ENCODE measurements at regions of chr4 and their contacts with region 1.

Region 1: GRCh38 chr4:1266881-1267763 is 18.2 kb upstream of the CTBP1 start:
- DNase-seq: peak in 3 of 14 experiments; percentile 23 to 40 (median 32)
- ATAC-seq: peak; percentile 81
- H3K4me3 ChIP-seq: peak overlapping the region; percentile 51
- H3K4me3 Mint-ChIP-seq: peak overlapping the region; percentile 78
- H3K27ac ChIP-seq: peak overlapping the region; percentile 38 to 58
- H3K27ac Mint-ChIP-seq: peak overlapping the region; percentile 94
- H3K4me1 ChIP-seq: peaks cover 4% of the 10 kb centered on the region
- H3K4me1 Mint-ChIP-seq: peaks cover 14% of the 10 kb centered on the region
- H3K27me3 ChIP-seq: no peaks in the 10 kb centered on the region
- H3K27me3 Mint-ChIP-seq: no peaks in the 10 kb centered on the region
- CTCF ChIP-seq: no peak

Region 2: DNA sequence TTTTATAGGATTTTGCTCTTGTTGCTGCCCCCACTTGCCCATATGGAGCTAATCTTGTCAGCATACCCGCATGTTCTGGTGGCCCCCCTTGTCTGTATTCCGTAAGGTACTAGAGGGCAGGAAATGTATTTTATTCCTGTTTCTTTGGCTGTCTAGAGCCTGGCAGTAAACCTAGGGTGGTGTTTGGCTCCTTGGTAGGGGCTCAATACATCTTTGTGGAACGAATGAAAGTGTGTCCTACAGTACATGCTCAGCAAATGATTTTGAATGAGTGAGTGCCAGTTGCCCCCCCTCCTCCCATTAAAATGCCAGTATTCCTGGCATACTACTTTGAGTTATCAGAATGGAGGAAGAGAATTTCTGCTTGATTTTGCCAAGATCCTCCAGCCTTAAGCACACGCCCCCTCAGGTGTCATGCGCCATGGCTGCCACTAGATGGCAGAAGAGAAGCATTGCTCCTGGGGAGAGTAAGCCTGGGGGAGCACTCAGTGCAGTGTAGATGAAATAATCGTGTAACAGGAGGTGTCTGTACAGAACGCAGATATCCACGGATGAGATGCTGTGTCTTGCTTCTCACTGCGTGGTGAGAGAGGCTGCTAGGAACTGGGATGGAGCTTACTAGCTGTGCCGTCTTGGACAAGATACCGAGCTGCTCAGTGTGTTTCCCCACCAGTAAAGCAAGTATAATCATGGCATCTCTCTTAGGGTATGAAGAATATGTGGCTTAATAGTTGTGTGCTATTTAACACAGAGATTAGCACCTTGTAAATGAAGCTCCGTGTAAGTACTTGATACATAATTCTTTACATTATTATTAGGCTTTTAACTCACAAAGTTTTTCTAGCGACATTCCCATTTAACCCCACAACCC is 136.6 kb before region 1 on chr4:
- CTCF ChIA-PET with region 1: interaction called, 20 read pairs
- POLR2A ChIA-PET with region 1: no interaction called
- intact Hi-C with region 1: loop called (anchors 1 kb)
- DNase-seq: peak; percentile 64 to 89 (median 72)
- ATAC-seq: peak; percentile 100
- H3K4me3 ChIP-seq: no peak overlapping the region
- H3K4me3 Mint-ChIP-seq: no peak overlapping the region
- H3K27ac ChIP-seq: no peak overlapping the region
- H3K27ac Mint-ChIP-seq: no peak overlapping the region
- H3K4me1 ChIP-seq: peaks cover 3% of the 10 kb centered on the region
- H3K4me1 Mint-ChIP-seq: peaks cover 5% of the 10 kb centered on the region
- H3K27me3 ChIP-seq: peaks cover 0 to 5% of the 10 kb centered on the region in 2 experiments
- H3K27me3 Mint-ChIP-seq: peaks cover 8% of the 10 kb centered on the region
- CTCF ChIP-seq: peak; percentile 99

Region 3: GRCh38 chr4:1167247-1167949 is 99.7 kb before region 1 on chr4:
- CTCF ChIA-PET with region 1: interaction called, 38 read pairs
- POLR2A ChIA-PET with region 1: interaction called, 10 read pairs
- intact Hi-C with region 1: loop called (anchors 1 kb)
- DNase-seq: peak; percentile 69 to 96 (median 84)
- ATAC-seq: peak; percentile 87
- H3K4me3 ChIP-seq: peak overlapping the region; percentile 79
- H3K4me3 Mint-ChIP-seq: peak overlapping the region; percentile 90
- H3K27ac ChIP-seq: no peak overlapping the region
- H3K27ac Mint-ChIP-seq: peak overlapping the region; percentile 67
- H3K4me1 ChIP-seq: peaks cover 40% of the 10 kb centered on the region
- H3K4me1 Mint-ChIP-seq: peaks cover 25% of the 10 kb centered on the region
- H3K27me3 ChIP-seq: peaks cover 19 to 21% of the 10 kb centered on the region in 2 experiments
- H3K27me3 Mint-ChIP-seq: peaks cover 16% of the 10 kb centered on the region
- CTCF ChIP-seq: peak; percentile 97

Region 4: DNA sequence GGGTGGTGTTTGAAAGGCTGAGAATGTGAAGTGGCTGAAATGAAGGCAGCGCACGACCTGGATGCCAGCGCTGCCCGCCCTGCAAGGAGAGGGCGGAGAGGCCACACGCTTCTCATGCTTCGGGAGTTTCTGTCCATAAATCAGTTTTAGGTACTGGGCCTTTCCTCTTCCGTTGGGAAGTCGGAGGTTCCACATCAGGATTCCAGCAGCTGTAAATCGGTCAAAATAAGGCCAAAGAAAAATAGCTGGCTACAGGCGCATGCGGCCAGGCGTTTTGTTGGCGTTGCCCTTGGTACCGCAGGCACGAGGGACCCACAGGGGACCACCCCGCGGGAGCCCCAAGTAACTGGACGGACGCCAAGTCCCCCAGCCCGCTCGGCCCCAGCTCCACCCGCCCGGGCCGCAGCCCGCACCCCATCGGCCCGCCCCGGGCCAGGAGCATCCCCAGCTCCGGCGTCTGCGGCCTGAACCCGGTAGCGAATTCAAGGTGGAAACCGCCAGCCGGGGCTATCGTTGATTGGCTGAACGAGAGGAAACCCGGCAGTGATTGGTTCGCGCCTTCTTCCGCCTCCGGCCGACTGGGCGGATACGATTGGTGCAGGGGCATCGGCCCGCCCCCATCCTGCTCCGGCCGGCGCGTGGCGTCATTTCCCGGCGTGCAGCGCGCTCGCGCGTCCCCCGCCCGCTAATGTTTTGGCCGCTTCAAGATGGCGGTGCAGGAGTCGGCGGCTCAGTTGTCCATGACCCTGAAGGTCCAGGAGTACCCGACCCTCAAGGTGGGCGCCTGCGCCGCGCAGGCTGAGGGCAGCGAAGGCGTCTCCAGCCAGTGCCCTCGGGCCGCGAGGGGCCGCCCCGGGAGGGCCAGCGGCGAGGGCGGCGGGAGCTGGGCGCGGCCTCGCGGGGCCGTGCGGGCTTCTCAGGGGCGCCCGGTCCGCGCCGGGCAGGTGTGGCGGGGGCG is 22.4 kb after region 1 on chr4 and contains the start of gene MAEA:
- CTCF ChIA-PET with region 1: interaction called, 26 read pairs
- POLR2A ChIA-PET with region 1: no interaction called
- intact Hi-C with region 1: loop called in 1 of 2 experiments (anchors 1 kb)
- DNase-seq: peak; percentile 94 to 98 (median 96)
- ATAC-seq: peak; percentile 99
- H3K4me3 ChIP-seq: peak within 1 kb of the TSS; percentile 73
- H3K4me3 Mint-ChIP-seq: peak within 1 kb of the TSS; percentile 93
- H3K27ac ChIP-seq: peak within 1 kb of the TSS; percentile 60 to 83
- H3K27ac Mint-ChIP-seq: peak within 1 kb of the TSS; percentile 93
- H3K4me1 ChIP-seq: peaks cover 46% of the 10 kb centered on the region
- H3K4me1 Mint-ChIP-seq: peaks cover 45% of the 10 kb centered on the region
- H3K27me3 ChIP-seq: no peaks in the 10 kb centered on the region
- H3K27me3 Mint-ChIP-seq: no peaks in the 10 kb centered on the region
- CTCF ChIP-seq: no peak
- total RNA-seq, gene MAEA: 61.5 to 63.2 TPM

Region 5: DNA sequence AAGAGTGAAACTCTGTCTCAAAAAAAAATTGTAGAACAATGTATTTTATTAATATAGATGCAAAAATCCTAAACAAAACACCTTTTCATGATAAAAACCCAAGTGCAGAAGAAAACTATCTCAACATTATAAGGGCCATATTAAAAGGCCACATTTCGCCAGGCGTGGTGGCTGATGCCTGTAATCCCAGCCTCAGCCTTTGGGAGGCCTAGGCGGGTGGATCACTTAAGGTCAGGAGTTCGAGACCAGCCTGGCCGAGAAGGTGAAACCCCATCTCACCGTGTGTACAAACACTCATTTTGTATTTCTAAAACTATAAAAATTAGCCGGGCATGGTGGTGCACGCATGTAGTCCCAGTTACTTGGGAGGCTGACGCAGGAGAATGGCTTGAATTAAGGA is 1259.4 kb after region 1 on chr4:
- CTCF ChIA-PET with region 1: no interaction called
- POLR2A ChIA-PET with region 1: no interaction called
- intact Hi-C with region 1: no loop called
- DNase-seq: no peak
- ATAC-seq: no peak
- H3K4me3 ChIP-seq: no peak overlapping the region
- H3K4me3 Mint-ChIP-seq: no peak overlapping the region
- H3K27ac ChIP-seq: no peak overlapping the region
- H3K27ac Mint-ChIP-seq: no peak overlapping the region
- H3K4me1 ChIP-seq: no peaks in the 10 kb centered on the region
- H3K4me1 Mint-ChIP-seq: no peaks in the 10 kb centered on the region
- H3K27me3 ChIP-seq: no peaks in the 10 kb centered on the region
- H3K27me3 Mint-ChIP-seq: no peaks in the 10 kb centered on the region
- CTCF ChIP-seq: no peak